ENCODE measurements at regions of chrX and their contacts with region 1.

Region 1: DNA sequence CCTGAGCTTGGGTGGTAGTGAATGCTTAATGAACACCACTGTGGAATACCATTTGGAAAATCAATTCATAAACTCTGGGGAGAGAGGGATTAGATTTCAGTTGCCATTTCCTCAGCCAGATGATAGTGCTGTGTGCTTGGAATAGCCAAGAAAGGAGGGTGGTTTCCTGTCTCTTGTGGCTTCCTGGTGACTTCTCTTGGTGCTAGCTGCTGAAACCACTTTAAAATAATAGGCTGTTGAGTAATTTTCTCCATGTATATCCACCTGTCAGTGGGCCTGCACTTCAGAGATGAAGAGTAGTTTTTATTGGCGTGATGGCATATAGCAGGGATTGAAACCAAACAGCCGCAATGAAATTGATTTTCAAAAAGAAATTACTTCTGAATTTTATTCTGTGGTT is 11.8 kb downstream of the EDA start:
- DNase-seq: no peak
- ATAC-seq: no peak
- H3K4me3 ChIP-seq: no peak overlapping the region
- H3K27ac ChIP-seq: no peak overlapping the region
- H3K4me1 ChIP-seq: no peaks in the 10 kb centered on the region
- H3K27me3 ChIP-seq: no peaks in the 10 kb centered on the region
- CTCF ChIP-seq: no peak
- POLR2A ChIP-seq: no peak

Region 2: DNA sequence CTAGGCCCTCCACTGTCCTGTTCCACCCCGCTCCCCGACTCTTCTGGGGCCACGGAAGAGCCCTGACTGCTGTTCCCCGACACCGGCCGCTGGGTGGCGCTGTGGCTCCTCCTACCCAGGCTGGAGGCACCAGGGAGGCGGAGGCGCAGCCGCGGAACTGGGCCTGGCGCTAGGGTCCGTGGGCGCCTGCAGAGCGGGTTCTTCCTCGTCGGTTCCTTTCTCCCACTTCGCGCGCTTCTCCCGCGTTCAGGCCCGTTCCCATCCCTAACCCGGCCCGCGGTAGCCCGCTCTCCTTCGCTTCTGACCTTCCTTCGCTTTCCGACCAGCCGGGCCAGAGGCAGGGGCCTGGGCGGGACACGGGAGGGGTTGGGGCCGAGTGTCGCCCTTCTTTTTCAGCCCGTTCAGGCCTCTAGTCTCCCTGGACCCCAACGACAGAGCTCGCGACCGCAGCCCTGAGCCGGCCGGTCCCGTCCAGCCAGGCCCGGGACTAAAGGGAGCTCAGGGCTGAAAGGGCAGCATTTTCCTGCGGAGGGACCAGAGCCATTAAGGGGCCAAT is 89.3 kb before region 1 on chrX:
- in situ Hi-C with region 1: loop called in 1 of 4 experiments (anchors 25 kb)
- intact Hi-C with region 1: no loop called
- DNase-seq: peak; percentile 23 to 43
- ATAC-seq: peak; percentile 78 to 80
- H3K4me3 ChIP-seq: peak overlapping the region; percentile 50 to 60 (median 53)
- H3K27ac ChIP-seq: no peak overlapping the region
- H3K4me1 ChIP-seq: no peaks in the 10 kb centered on the region
- H3K27me3 ChIP-seq: no peaks in the 10 kb centered on the region
- CTCF ChIP-seq: peak; percentile 62 to 80 (median 74)
- POLR2A ChIP-seq: no peak

Region 3: GRCh38 chrX:69724307-69724706 is 96.6 kb after region 1 on chrX:
- in situ Hi-C with region 1: no loop called
- intact Hi-C with region 1: no loop called
- DNase-seq: no peak
- ATAC-seq: no peak
- H3K4me3 ChIP-seq: no peak overlapping the region
- H3K27ac ChIP-seq: no peak overlapping the region
- H3K4me1 ChIP-seq: no peaks in the 10 kb centered on the region
- H3K27me3 ChIP-seq: no peaks in the 10 kb centered on the region
- CTCF ChIP-seq: no peak
- POLR2A ChIP-seq: no peak